B cell (primary cell): ENCODE measurements at regions of chr7 and their contacts with region 1.

Region 1: DNA sequence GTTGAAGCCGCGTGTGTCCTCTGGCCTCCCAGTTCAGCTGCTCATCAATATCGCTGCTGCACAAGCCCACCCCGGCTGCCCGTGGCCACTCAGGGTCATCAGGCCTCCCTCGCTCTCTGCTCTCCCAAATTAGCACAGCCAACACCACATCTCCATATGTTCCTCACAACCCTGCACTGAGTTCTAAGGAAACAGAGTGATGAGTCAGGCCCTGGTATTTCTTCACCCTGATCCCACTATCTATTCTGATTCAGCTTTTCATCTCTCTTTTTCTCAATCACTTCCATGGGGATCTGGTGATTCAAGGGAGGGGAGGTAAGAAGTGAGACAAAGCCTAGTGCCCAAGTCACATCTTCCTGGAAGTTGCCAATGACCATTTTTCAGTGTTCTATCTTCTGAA is 23.8 kb downstream of the CYTH3 start:
- DNase-seq: no peak
- ATAC-seq: no peak
- H3K4me3 ChIP-seq: no peak overlapping the region
- H3K4me3 Mint-ChIP-seq: no peak overlapping the region
- H3K27ac ChIP-seq: no peak overlapping the region
- H3K27ac Mint-ChIP-seq: no peak overlapping the region
- H3K4me1 ChIP-seq: peaks cover 0 to 5% of the 10 kb centered on the region in 2 donors
- H3K4me1 Mint-ChIP-seq: no peaks in the 10 kb centered on the region
- H3K27me3 ChIP-seq: no peaks in the 10 kb centered on the region
- H3K27me3 Mint-ChIP-seq: peaks cover 11% of the 10 kb centered on the region
- CTCF ChIP-seq: no peak

Region 2: DNA sequence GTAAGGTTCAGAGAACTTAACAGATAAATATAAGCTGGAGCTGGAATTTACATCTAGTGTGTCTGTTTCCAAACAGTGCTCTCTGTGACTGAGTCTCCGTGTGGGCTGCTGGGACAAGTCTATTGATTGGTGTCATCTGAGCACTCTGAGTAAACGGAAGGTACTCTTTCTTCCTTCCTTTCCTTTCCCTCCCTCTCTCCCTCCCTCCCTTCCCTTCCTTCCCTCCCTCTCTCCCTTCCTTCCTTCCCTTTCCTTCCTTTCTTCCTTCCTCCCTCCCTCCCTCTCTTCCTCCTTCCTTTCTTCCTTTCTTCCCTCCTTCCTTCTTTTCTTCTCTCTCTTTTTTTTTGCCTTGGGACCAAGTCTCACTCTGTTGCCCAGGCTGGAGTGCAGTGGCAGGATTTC is 155.6 kb before region 1 on chr7:
- CTCF ChIA-PET with region 1: no interaction called
- POLR2A ChIA-PET with region 1: no interaction called
- intact Hi-C with region 1: no loop called
- DNase-seq: no peak
- ATAC-seq: no peak
- H3K4me3 ChIP-seq: no peak overlapping the region
- H3K4me3 Mint-ChIP-seq: no peak overlapping the region
- H3K27ac ChIP-seq: no peak overlapping the region
- H3K27ac Mint-ChIP-seq: no peak overlapping the region
- H3K4me1 ChIP-seq: no peaks in the 10 kb centered on the region
- H3K4me1 Mint-ChIP-seq: no peaks in the 10 kb centered on the region
- H3K27me3 ChIP-seq: no peaks in the 10 kb centered on the region
- H3K27me3 Mint-ChIP-seq: peaks cover 18% of the 10 kb centered on the region
- CTCF ChIP-seq: no peak

Region 3: GRCh38 chr7:6260291-6261187 is 12.0 kb after region 1 on chr7:
- CTCF ChIA-PET with region 1: interaction called, 5 read pairs
- POLR2A ChIA-PET with region 1: interaction called, 18 read pairs
- intact Hi-C with region 1: no loop called
- DNase-seq: no peak
- ATAC-seq: no peak
- H3K4me3 ChIP-seq: no peak overlapping the region
- H3K4me3 Mint-ChIP-seq: no peak overlapping the region
- H3K27ac ChIP-seq: no peak overlapping the region
- H3K27ac Mint-ChIP-seq: no peak overlapping the region
- H3K4me1 ChIP-seq: peaks cover 23 to 33% of the 10 kb centered on the region in 2 donors
- H3K4me1 Mint-ChIP-seq: peaks cover 43% of the 10 kb centered on the region
- H3K27me3 ChIP-seq: no peaks in the 10 kb centered on the region
- H3K27me3 Mint-ChIP-seq: no peaks in the 10 kb centered on the region
- CTCF ChIP-seq: no peak

Region 4: GRCh38 chr7:6628008-6628407 is 379.4 kb after region 1 on chr7:
- CTCF ChIA-PET with region 1: no interaction called
- POLR2A ChIA-PET with region 1: no interaction called
- intact Hi-C with region 1: no loop called
- DNase-seq: no peak
- ATAC-seq: no peak
- H3K4me3 ChIP-seq: no peak overlapping the region
- H3K4me3 Mint-ChIP-seq: no peak overlapping the region
- H3K27ac ChIP-seq: no peak overlapping the region
- H3K27ac Mint-ChIP-seq: no peak overlapping the region
- H3K4me1 ChIP-seq: peaks cover 11 to 20% of the 10 kb centered on the region in 2 donors
- H3K4me1 Mint-ChIP-seq: peaks cover 14% of the 10 kb centered on the region
- H3K27me3 ChIP-seq: no peaks in the 10 kb centered on the region
- H3K27me3 Mint-ChIP-seq: no peaks in the 10 kb centered on the region
- CTCF ChIP-seq: no peak